Activated naive CD4-positive, alpha-beta T cell treated with anti-CD3 and anti-CD28 coated beads for 36 hours (primary cell): ENCODE measurements at regions of chr4 and their contacts with region 1.

Region 1: DNA sequence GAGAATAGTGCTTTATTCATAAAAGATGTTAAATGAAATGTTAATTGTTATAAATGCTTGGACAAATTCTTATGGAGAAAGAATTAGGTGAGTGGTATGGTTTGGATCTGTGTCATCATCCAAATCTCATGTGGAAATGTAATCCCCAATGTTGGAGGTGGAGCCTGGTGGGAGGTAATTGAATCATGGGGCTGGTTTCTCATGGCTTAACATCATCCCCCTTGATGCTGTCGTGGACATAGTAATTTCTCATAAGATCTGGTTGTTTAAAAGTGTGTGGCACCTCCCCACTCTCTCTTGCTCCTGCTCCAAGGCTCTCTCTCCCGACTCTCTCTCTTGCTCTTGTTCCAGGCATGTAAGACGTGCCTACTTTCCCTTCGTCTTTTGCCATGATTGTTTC is 22.5 kb downstream of the GYPE start:
- DNase-seq: no peak
- H3K4me3 Mint-ChIP-seq: no peak overlapping the region
- H3K27ac Mint-ChIP-seq: no peak overlapping the region
- H3K4me1 Mint-ChIP-seq: no peaks in the 10 kb centered on the region
- H3K27me3 Mint-ChIP-seq: no peaks in the 10 kb centered on the region

Region 2: GRCh38 chr4:144115519-144115918 is 232.6 kb after region 1 on chr4:
- CTCF ChIA-PET with region 1: no interaction called
- intact Hi-C with region 1: loop called (anchors 10 kb)
- DNase-seq: no peak
- H3K4me3 Mint-ChIP-seq: no peak overlapping the region
- H3K27ac Mint-ChIP-seq: no peak overlapping the region
- H3K4me1 Mint-ChIP-seq: no peaks in the 10 kb centered on the region
- H3K27me3 Mint-ChIP-seq: peaks cover 8% of the 10 kb centered on the region